Activated T-helper 1 cell treated with anti-CD3 and anti-CD28 coated beads, Interleukin-12 subunit alpha, Interleukin-12 subunit beta, Interleukin-2, Interleukin-4 antibody, amounts not matched to agents 30 ng/mL and 10 ng/mL and 1 ng/mL, durations not matched to agents 14 hours and 24 hours and 36 hours (primary cell): ENCODE measurements at regions of chr14 and their contacts with region 1.

Region 1: DNA sequence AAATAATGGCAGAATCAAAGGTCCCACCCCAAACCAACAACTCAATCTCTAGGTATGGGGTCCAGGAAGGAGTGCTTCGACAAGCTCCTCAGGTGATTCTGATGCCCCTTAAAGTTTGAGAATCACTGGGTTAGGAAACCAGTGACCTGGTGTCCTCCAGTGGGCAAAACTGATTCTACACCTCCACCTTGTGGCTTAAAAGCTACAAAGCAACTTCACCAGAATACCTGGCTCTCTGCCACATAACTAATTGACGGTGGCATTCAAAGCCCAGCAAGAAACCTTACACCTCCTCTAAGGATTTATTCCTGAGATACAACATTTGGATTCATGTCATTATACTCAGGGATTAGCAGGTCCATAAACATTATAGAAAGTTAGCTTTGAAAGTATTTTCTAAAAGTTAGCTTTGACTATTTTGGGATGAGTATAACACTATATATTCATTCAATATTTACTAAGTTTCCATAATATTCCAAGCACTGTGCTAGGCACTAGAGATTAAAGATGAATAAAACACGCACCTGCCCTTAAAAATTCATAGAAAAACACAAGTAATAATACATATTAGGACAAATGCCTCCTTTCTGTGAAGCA is 45.4 kb downstream of the DCAF5 start:
- DNase-seq: no peak
- H3K4me3 Mint-ChIP-seq: no peak overlapping the region
- H3K27ac Mint-ChIP-seq: no peak overlapping the region
- H3K4me1 Mint-ChIP-seq: no peaks in the 10 kb centered on the region
- H3K27me3 Mint-ChIP-seq: no peaks in the 10 kb centered on the region

Region 2: DNA sequence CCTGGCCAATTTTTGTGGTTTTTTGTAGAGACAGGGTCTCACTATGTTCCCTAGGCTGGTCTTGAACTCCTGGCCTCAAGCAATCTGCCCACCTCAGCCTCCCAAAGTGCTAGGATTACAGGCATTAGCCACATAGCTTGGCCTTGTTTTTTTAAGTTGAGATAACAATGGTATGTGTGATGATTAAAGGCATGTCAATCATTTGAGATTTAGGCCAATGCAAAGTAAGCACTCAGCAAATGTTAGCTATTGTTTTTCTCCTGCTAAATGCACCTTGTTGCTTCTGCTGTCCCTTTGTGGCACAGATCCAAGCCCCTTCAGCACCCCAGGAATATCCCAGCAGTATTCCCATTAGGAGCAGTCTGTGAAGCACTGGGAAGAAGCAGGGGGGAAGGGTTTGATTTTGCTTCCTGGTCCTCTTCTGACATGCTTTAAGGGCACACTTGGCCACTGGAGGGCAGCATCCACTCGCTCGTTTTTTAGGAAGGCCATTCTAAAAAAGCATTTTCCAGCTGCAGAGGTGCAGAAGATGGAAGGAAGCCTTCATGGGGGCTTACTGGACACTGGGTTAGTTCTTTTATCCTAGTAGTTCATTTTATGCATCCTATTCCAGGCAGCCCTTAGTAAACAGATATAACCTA is 244.4 kb before region 1 on chr14:
- intact Hi-C with region 1: loop called (anchors 1 kb)
- DNase-seq: peak; percentile 44
- H3K4me3 Mint-ChIP-seq: no peak overlapping the region
- H3K27ac Mint-ChIP-seq: no peak overlapping the region
- H3K4me1 Mint-ChIP-seq: no peaks in the 10 kb centered on the region
- H3K27me3 Mint-ChIP-seq: peaks cover 3% of the 10 kb centered on the region

Region 3: DNA sequence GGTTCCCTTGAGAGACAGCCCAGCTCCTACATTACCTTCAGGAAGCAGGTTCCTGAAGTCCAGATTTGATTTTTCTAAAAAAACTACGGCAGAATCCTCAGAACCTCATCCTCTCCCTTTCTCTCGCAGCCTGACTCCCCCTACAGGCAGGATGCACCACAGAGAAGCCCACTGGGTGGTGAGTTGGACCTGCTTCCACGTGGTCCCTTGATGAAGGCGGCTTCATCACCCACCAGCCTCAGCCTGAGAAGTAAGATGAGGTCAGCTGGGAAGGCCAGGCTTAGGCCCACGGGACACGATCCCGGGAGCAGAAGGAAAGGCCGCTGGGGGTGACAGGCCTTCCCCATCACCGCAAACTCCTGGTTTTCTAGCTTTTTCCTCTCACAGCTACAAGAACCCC is 211.4 kb before region 1 on chr14:
- intact Hi-C with region 1: no loop called
- DNase-seq: no peak
- H3K4me3 Mint-ChIP-seq: no peak overlapping the region
- H3K27ac Mint-ChIP-seq: no peak overlapping the region
- H3K4me1 Mint-ChIP-seq: peaks cover 20% of the 10 kb centered on the region
- H3K27me3 Mint-ChIP-seq: peaks cover 6% of the 10 kb centered on the region

Region 4: DNA sequence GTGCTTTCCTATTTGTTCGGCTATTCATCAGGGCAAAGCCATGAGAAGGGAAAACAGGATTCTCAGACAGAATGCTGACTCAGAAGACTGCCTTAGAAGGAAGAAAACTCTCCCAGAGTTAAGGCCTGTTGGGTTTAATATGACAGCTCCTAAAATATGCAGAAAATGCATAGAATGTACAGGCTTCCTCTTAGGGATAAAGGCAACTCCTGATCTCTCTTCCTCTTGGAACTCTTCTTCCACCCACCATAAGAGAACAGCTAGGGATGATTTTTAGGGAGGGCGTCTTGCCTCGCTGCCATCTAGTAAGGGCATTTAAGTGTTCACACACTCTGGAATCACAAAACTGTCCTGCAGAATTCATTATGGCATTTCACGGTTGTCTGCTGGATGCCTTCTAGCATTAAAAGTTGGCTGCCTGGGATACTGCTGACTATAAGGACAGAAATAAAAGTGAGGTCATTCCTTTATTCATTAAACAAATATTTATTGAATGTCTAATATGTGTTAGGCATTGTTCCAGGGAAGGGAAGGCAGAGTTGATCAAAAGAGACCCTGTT is 28.2 kb before region 1 on chr14:
- intact Hi-C with region 1: no loop called
- DNase-seq: no peak
- H3K4me3 Mint-ChIP-seq: no peak overlapping the region
- H3K27ac Mint-ChIP-seq: no peak overlapping the region
- H3K4me1 Mint-ChIP-seq: peaks cover 6% of the 10 kb centered on the region
- H3K27me3 Mint-ChIP-seq: no peaks in the 10 kb centered on the region